ENCODE measurements at regions of chr19 and their contacts with region 1.

Region 1: DNA sequence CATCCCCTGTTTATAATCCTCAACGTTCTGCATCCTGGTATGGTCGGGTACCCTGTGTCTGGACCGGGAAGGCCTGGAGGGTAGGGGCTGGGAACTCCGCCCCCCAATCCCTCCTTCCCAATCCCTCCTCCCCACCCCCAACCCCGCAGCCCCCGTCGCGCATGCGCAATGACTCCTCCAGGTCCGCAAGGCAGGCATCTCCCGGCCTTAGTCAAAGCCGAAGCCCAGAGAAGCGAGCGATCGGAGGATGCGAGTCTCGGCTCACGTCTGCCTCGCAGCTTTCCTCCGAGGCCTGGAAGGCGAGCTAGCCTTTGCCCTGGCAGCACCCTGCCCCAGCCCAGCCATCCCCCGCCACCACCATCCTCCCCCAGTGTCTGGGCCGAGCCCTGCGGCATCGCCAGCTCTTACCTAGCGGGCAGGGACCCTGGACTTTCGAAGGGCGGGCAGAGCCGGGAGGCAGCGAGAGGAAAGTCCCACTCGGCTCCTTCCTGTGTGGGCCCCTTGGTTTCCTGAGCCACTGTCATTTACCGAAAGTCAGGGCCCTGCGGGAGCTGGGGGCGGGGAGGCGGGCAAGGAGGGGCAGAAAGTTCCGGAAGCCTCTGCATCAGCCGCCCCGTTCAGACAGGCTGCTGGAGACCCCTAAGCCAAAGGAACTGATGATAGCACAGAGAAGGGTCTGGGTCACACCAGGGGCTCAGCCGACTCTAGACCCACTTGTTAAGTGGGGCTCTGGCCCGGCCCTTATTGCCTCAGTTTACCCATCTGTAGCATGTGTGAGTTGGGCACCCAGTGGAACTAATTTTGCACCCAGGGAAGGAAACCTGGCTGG is at the start of gene JAK3:
- DNase-seq: peak; percentile 96
- ATAC-seq: peak; percentile 82
- H3K4me3 Mint-ChIP-seq: peak within 1 kb of the TSS; percentile 92
- H3K27ac Mint-ChIP-seq: peak within 1 kb of the TSS; percentile 98
- H3K4me1 Mint-ChIP-seq: peaks cover 69% of the 10 kb centered on the region
- H3K27me3 Mint-ChIP-seq: no peaks in the 10 kb centered on the region
- total RNA-seq, gene JAK3: 174 to 180 TPM

Region 2: GRCh38 chr19:17747205-17748098 is 100.3 kb before region 1 on chr19:
- CTCF ChIA-PET with region 1: no interaction called
- POLR2A ChIA-PET with region 1: interaction called, 11 read pairs
- intact Hi-C with region 1: loop called in 1 of 2 experiments (anchors 1 kb)
- DNase-seq: peak; percentile 98
- ATAC-seq: peak; percentile 90
- H3K4me3 Mint-ChIP-seq: peak overlapping the region; percentile 76
- H3K27ac Mint-ChIP-seq: peak overlapping the region; percentile 60
- H3K4me1 Mint-ChIP-seq: peaks cover 42% of the 10 kb centered on the region
- H3K27me3 Mint-ChIP-seq: no peaks in the 10 kb centered on the region

Region 3: GRCh38 chr19:17794731-17795536 is 52.8 kb before region 1 on chr19 and contains the start of gene B3GNT3:
- CTCF ChIA-PET with region 1: interaction called, 4 read pairs
- POLR2A ChIA-PET with region 1: no interaction called
- intact Hi-C with region 1: loop called in 1 of 2 experiments (anchors 1 kb)
- DNase-seq: peak; percentile 56
- ATAC-seq: no peak
- H3K4me3 Mint-ChIP-seq: peak within 1 kb of the TSS; percentile 60
- H3K27ac Mint-ChIP-seq: peak within 1 kb of the TSS; percentile 19
- H3K4me1 Mint-ChIP-seq: peaks cover 57% of the 10 kb centered on the region
- H3K27me3 Mint-ChIP-seq: no peaks in the 10 kb centered on the region
- total RNA-seq, gene B3GNT3: 0.75 to 0.95 TPM

Measured in activated CD4-positive, alpha-beta T cell treated with anti-CD3 and anti-CD28 coated beads for 36 hours (primary cell).